Lower leg skin (tissue), 4 donors: ENCODE measurements at regions of chr9 and their contacts with region 1.

Region 1: GRCh38 chr9:36328798-36329411 is 70.7 kb upstream of the GNE start:
- DNase-seq: peak in 1 of 2 donors; percentile 43
- H3K4me3 ChIP-seq: no peak overlapping the region
- CTCF ChIP-seq: no peak
- POLR2A ChIP-seq: no peak

Region 2: DNA sequence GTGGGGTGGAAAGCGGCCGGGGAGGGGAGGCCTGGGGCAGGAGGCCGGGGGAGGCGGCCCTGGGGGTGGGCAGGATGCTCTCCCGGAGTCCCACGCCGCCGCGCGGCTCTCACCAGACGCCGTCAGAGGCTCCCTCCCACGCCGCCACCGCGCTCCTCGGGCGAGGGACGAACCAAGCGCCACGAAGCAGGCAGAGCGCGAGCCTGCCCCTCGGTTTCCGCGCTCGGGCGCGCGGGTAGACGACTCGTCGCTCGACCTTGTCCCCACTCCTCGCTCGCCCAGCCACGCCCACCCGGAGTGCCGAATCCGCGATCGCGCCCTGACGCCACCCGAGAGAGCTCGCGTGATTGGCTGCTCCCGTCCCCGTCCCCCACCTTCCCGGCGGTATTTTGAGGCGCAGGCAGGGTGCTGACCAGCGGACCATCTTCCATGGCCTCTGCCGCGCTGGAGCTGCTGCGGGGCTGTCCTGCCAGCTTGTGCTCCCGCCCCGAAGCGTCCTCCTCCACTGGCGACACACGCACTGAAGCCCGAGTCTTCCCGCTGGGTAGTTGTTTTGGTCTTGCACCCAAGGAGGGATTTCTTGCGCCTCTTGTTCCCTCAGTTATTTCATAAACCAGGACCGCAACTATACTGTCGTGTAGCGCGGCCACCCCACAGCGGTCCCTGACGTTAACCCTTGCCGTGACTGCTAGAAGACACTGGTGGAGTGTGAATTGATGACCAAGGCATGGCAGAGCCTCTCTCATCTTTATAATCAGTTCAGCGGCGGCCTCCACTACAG is 70.5 kb before region 1 on chr9 and contains the start of gene GNE:
- intact Hi-C with region 1: loop called (anchors 10 kb)
- DNase-seq: peak; percentile 96 to 100
- H3K4me3 ChIP-seq: peak within 1 kb of the TSS; percentile 88
- CTCF ChIP-seq: no peak
- POLR2A ChIP-seq: peak in 1 of 2 donors; percentile 76
- total RNA-seq, gene GNE: 5.1 to 16.8 (median 13.7) TPM